ENCODE measurements at regions of chr6 and their contacts with region 1.

Region 1: DNA sequence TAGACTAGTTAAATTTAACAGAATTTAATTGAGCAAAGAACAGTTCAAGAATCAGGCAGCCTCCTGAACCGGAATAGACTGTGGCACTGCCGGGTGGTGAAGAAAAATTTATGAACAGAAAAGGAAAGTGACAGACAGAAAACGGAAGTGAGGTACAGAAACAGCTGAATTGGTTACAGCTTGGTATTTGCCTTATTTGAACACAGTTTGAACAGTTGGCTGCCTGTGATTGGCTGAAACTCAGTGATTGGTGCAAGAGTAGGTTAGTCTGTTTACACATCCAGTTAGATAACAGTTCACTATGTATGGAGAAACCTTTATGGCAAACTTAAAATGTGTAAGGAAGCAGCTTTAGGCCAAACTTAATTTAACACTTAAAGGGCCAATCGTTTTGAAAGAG is 116.0 kb upstream of the CITED2 start:
- DNase-seq: no peak
- ATAC-seq: peak; percentile 5
- H3K4me3 Mint-ChIP-seq: peak overlapping the region; percentile 8
- H3K27ac Mint-ChIP-seq: peak overlapping the region; percentile 8
- H3K4me1 Mint-ChIP-seq: peaks cover 9% of the 10 kb centered on the region
- H3K27me3 Mint-ChIP-seq: no peaks in the 10 kb centered on the region
- CTCF ChIP-seq: no peak

Region 2: GRCh38 chr6:138931660-138932059 is 558.8 kb before region 1 on chr6:
- CTCF ChIA-PET with region 1: no interaction called
- POLR2A ChIA-PET with region 1: interaction called, 28 read pairs
- intact Hi-C with region 1: no loop called
- DNase-seq: no peak
- ATAC-seq: no peak
- H3K4me3 Mint-ChIP-seq: no peak overlapping the region
- H3K27ac Mint-ChIP-seq: no peak overlapping the region
- H3K4me1 Mint-ChIP-seq: peaks cover 12% of the 10 kb centered on the region
- H3K27me3 Mint-ChIP-seq: no peaks in the 10 kb centered on the region
- CTCF ChIP-seq: no peak

Region 3: DNA sequence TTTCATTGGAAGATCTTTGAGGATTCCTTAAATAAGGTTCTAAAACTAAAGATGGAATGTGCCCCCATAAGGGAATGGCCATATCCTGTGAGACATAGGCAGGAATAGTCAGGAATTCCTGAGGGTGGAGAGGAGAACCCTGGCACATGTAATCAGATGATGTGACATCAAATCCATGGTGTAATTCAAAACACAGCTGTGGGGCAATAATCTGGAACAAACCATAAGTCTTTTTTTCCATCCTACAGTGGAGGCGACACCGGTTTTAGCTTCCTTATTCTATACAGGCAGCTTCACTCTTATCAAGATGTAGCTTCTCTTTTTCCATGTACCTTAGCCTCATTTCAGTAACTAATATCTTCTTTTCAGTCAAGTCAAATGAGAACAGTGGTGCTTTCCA is 17.5 kb after region 1 on chr6:
- CTCF ChIA-PET with region 1: no interaction called
- POLR2A ChIA-PET with region 1: no interaction called
- intact Hi-C with region 1: no loop called
- DNase-seq: no peak
- ATAC-seq: no peak
- H3K4me3 Mint-ChIP-seq: no peak overlapping the region
- H3K27ac Mint-ChIP-seq: no peak overlapping the region
- H3K4me1 Mint-ChIP-seq: no peaks in the 10 kb centered on the region
- H3K27me3 Mint-ChIP-seq: no peaks in the 10 kb centered on the region
- CTCF ChIP-seq: no peak

Measured in activated B cell treated with CpG ODN at 0.5 μM for 24 hours (primary cell).